ENCODE measurements at regions of chr20 and their contacts with region 1.

Region 1: GRCh38 chr20:41173161-41173721 is 35.9 kb downstream of the PLCG1 start:
- DNase-seq: peak; percentile 71
- ATAC-seq: peak; percentile 89
- H3K4me3 ChIP-seq: no peak overlapping the region
- H3K4me3 Mint-ChIP-seq: no peak overlapping the region
- H3K27ac ChIP-seq: no peak overlapping the region
- H3K27ac Mint-ChIP-seq: peak overlapping the region; percentile 61
- H3K4me1 ChIP-seq: no peaks in the 10 kb centered on the region
- H3K4me1 Mint-ChIP-seq: no peaks in the 10 kb centered on the region
- H3K27me3 ChIP-seq: no peaks in the 10 kb centered on the region
- H3K27me3 Mint-ChIP-seq: no peaks in the 10 kb centered on the region
- CTCF ChIP-seq: peak; percentile 89

Region 2: GRCh38 chr20:40683221-40683893 is 489.9 kb before region 1 on chr20:
- CTCF ChIA-PET with region 1: no interaction called
- POLR2A ChIA-PET with region 1: no interaction called
- intact Hi-C with region 1: no loop called
- DNase-seq: no peak
- ATAC-seq: no peak
- H3K4me3 ChIP-seq: no peak overlapping the region
- H3K4me3 Mint-ChIP-seq: no peak overlapping the region
- H3K27ac ChIP-seq: no peak overlapping the region
- H3K27ac Mint-ChIP-seq: no peak overlapping the region
- H3K4me1 ChIP-seq: peaks cover 7 to 8% of the 10 kb centered on the region in 2 donors
- H3K4me1 Mint-ChIP-seq: peaks cover 4% of the 10 kb centered on the region
- H3K27me3 ChIP-seq: peaks cover 0 to 67% (median 33%) of the 10 kb centered on the region in 4 experiments
- H3K27me3 Mint-ChIP-seq: peaks cover 65% of the 10 kb centered on the region
- CTCF ChIP-seq: no peak

Region 3: DNA sequence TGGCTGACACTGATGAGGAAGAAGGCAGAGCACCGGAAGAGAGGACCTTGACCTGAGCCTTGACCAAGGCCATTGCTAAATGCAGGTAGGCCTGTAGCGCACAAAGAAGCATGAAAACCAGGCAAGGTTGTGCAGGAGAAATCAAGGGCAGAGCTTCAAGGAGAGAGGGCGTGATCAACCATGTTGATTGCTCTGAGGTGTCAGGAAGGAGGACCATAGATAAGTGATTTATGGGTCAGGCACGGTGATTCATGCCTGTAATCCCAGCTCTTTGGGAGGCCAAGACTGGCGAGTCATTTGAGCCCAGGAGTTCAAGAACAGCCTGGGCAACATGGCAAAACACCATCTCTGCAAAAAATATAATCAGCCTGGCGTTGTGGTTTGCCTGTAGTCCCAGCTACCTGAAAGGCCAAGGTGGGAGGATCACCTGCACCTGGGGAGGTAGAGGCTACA is 23.5 kb before region 1 on chr20:
- CTCF ChIA-PET with region 1: interaction called, 10 read pairs
- POLR2A ChIA-PET with region 1: no interaction called
- intact Hi-C with region 1: no loop called
- DNase-seq: no peak
- ATAC-seq: no peak
- H3K4me3 ChIP-seq: no peak overlapping the region
- H3K4me3 Mint-ChIP-seq: no peak overlapping the region
- H3K27ac ChIP-seq: no peak overlapping the region
- H3K27ac Mint-ChIP-seq: no peak overlapping the region
- H3K4me1 ChIP-seq: peaks cover 28 to 38% of the 10 kb centered on the region in 2 donors
- H3K4me1 Mint-ChIP-seq: peaks cover 69% of the 10 kb centered on the region
- H3K27me3 ChIP-seq: no peaks in the 10 kb centered on the region
- H3K27me3 Mint-ChIP-seq: no peaks in the 10 kb centered on the region
- CTCF ChIP-seq: no peak

Region 4: DNA sequence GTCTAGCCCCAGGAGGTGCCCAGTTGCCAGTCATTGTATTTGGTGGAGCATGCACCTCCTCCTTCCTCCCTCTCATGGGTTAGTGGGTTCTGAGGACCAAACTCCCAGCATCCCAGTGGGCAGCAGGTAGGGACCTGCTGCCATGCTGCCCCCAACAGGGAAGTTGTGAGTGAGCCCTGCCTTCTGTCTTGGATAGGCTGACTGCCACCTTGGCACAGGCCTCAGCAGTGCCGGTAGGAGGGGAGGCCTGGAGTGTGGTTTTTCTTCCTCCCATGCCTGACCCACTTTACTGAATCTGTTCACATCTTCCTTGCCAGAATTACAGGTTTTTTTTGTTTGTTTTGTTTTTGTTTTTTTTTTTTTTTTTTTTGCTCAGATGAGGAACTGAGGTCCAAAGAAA is 11.4 kb before region 1 on chr20:
- CTCF ChIA-PET with region 1: interaction called, 64 read pairs
- POLR2A ChIA-PET with region 1: no interaction called
- intact Hi-C with region 1: no loop called
- DNase-seq: no peak
- ATAC-seq: no peak
- H3K4me3 ChIP-seq: no peak overlapping the region
- H3K4me3 Mint-ChIP-seq: no peak overlapping the region
- H3K27ac ChIP-seq: no peak overlapping the region
- H3K27ac Mint-ChIP-seq: no peak overlapping the region
- H3K4me1 ChIP-seq: peaks cover 19 to 32% of the 10 kb centered on the region in 2 donors
- H3K4me1 Mint-ChIP-seq: peaks cover 30% of the 10 kb centered on the region
- H3K27me3 ChIP-seq: peaks cover 0 to 9% (median under 1%) of the 10 kb centered on the region in 4 experiments
- H3K27me3 Mint-ChIP-seq: no peaks in the 10 kb centered on the region
- CTCF ChIP-seq: no peak

Region 5: GRCh38 chr20:41222296-41222695 is 49.1 kb after region 1 on chr20:
- CTCF ChIA-PET with region 1: interaction called, 10 read pairs
- POLR2A ChIA-PET with region 1: no interaction called
- intact Hi-C with region 1: no loop called
- DNase-seq: no peak
- ATAC-seq: no peak
- H3K4me3 ChIP-seq: no peak overlapping the region
- H3K4me3 Mint-ChIP-seq: no peak overlapping the region
- H3K27ac ChIP-seq: no peak overlapping the region
- H3K27ac Mint-ChIP-seq: no peak overlapping the region
- H3K4me1 ChIP-seq: no peaks in the 10 kb centered on the region
- H3K4me1 Mint-ChIP-seq: peaks cover 4% of the 10 kb centered on the region
- H3K27me3 ChIP-seq: no peaks in the 10 kb centered on the region
- H3K27me3 Mint-ChIP-seq: no peaks in the 10 kb centered on the region
- CTCF ChIP-seq: no peak

Region 6: GRCh38 chr20:41232973-41233926 is 60.0 kb after region 1 on chr20:
- CTCF ChIA-PET with region 1: interaction called, 34 read pairs
- POLR2A ChIA-PET with region 1: no interaction called
- intact Hi-C with region 1: loop called (anchors 1 kb)
- DNase-seq: no peak
- ATAC-seq: peak; percentile 41
- H3K4me3 ChIP-seq: no peak overlapping the region
- H3K4me3 Mint-ChIP-seq: peak overlapping the region; percentile 17
- H3K27ac ChIP-seq: no peak overlapping the region
- H3K27ac Mint-ChIP-seq: peak overlapping the region; percentile 8
- H3K4me1 ChIP-seq: peaks cover 9 to 15% of the 10 kb centered on the region in 2 donors
- H3K4me1 Mint-ChIP-seq: peaks cover 26% of the 10 kb centered on the region
- H3K27me3 ChIP-seq: no peaks in the 10 kb centered on the region
- H3K27me3 Mint-ChIP-seq: no peaks in the 10 kb centered on the region
- CTCF ChIP-seq: no peak